Activated naive CD4-positive, alpha-beta T cell treated with anti-CD3 and anti-CD28 coated beads for 36 hours (primary cell): ENCODE measurements at regions of chr11 and their contacts with region 1.

Region 1: GRCh38 chr11:22169833-22170232 is 23.1 kb upstream of the ANO5 start:
- DNase-seq: no peak
- H3K4me3 Mint-ChIP-seq: no peak overlapping the region
- H3K27ac Mint-ChIP-seq: no peak overlapping the region
- H3K4me1 Mint-ChIP-seq: no peaks in the 10 kb centered on the region
- H3K27me3 Mint-ChIP-seq: no peaks in the 10 kb centered on the region

Region 2: DNA sequence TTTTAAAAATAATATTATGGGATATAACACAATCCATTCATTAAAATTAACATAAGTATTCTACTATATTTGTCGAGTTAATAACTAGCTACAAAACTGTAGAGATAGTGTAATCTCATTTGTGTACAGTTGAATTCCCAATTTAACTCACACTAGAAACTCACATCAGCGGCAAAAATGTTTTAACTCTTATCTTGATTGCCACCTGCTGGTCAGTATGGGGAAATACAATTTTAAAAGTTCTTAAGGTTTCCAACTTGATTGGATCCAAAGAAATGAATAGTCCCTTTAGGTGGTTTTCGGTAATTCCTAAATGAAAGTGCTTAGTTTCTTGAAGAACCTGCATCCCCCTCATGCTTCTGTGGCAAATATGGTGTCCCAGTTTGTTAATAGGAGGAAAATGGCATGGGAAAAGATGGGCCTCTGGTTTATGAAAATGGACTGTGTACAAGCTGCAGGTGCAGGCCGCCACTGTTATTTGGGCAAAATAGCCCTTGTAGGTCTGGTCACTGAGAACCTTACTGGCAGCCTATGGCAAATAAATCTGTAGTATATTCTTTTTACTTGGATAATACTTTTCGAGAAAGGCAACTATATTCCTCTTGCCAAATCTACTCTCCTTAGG is 134.6 kb after region 1 on chr11:
- CTCF ChIA-PET with region 1: interaction called, 3 read pairs
- intact Hi-C with region 1: loop called (anchors 2 kb)
- DNase-seq: no peak
- H3K4me3 Mint-ChIP-seq: no peak overlapping the region
- H3K27ac Mint-ChIP-seq: no peak overlapping the region
- H3K4me1 Mint-ChIP-seq: no peaks in the 10 kb centered on the region
- H3K27me3 Mint-ChIP-seq: peaks cover 15% of the 10 kb centered on the region